ENCODE measurements at regions of chr10 and their contacts with region 1.

Region 1: GRCh38 chr10:11045995-11046775 is 28.5 kb downstream of the CELF2 start:
- DNase-seq: peak; percentile 91
- ATAC-seq: peak; percentile 82

Region 2: DNA sequence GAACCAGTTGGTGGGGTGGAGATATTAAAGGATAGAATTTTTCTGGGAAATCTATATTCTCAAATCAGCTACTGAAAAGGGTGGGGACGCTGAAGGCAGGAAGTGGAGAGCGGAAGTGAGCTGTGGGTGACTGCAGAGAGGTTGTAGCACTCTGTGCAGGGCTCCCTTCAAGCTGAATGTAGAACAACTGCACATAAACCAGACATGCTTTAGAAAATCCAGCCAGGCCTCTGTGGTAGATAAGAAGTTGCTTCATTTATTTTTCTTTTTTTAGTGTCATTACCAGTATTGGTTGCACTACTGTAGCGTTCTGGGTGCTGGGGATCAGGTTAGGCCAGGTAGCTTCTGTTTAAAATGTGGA is 99.3 kb after region 1 on chr10:
- intact Hi-C with region 1: loop called (anchors 5 kb)
- DNase-seq: no peak
- ATAC-seq: peak; percentile 72

Region 3: DNA sequence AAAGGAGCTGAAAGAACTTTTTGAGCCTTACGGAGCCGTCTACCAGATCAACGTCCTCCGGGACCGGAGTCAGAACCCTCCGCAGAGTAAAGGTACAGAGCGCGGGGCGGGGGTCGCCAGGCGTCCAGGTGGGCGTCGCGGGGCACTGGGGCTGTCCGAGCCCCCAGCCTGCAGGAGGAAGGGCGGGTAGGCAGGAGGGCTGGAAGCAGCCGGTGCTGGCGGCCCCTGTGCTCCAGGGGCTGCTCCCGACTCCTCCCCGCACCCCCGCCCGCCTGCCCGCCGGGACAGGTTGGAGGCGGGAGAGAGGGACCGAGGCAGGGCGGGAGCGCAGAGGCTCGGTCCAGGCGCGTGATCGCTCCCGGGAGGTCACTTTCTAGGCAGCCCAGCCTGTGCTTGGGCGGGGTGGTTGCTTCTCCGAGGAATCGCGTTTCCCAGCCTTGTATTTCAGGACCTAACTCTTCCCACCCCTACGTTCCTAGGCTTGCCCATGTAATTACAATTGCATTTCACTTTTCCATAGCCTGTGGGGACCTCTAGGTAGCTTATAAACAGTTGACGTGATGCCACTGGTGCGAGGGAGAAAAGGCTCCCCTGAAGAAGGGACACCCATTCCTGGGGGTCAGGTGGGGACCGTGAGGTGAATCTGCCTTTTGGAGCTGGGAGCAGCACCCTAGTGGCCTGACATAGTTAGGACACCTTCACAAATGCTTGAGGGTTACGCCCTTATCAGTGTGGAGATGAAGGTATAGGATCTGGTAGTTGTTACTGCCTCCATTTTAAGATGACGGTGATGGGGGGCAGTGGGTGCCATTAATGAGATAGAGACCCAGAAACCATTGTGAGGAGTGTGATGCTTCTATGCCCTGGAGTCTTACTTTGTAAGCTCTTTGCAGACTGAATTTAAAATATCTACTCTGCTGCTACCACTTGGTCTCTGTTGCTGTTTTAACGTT is 119.7 kb after region 1 on chr10:
- intact Hi-C with region 1: loop called (anchors 5 kb)
- DNase-seq: peak; percentile 84
- ATAC-seq: peak; percentile 81

Measured in Right ventricle myocardium inferior (tissue), 1 donor.